ENCODE measurements at regions of chr11 and their contacts with region 1.

Region 1: DNA sequence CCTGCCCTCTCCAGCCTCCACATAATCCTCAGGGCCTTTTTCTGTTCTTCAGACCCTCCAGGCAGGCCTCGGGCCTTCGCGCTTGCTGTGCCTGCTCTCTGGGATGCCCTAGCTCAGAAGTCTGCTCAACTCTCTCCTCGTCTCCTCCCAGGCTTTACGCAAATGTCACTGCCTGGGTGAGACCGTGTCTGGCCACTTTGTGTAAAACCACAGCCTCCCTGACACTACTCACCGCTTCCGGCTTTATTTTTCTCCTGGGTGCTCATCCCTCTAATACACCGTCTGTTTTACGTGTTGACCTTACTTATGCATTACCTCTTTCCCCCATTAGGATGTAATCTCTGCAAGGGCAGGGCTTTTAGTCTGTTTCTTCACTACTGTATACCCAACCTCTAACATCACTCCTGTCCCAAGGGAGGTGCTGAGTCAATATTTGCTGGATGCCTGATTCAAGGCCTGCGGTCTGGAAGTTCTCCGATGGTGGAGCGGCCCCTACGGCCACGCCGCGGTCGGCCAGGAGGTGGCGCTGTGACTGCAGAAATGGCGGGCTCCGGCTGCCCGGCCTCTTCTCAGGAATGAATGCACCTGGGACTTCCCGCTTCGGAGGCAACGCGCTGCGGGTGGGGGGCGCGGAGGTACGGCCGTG is 58.2 kb upstream of the THY1 start:
- DNase-seq: peak; percentile 82
- H3K4me3 ChIP-seq: no peak overlapping the region
- H3K27ac ChIP-seq: no peak overlapping the region
- H3K4me1 ChIP-seq: peaks cover 0 to 11% (median 2%) of the 10 kb centered on the region in 4 donors
- H3K27me3 ChIP-seq: no peaks in the 10 kb centered on the region
- CTCF ChIP-seq: peak; percentile 91 to 97 (median 94)
- EP300 ChIP-seq: no peak
- POLR2A ChIP-seq: no peak

Region 2: DNA sequence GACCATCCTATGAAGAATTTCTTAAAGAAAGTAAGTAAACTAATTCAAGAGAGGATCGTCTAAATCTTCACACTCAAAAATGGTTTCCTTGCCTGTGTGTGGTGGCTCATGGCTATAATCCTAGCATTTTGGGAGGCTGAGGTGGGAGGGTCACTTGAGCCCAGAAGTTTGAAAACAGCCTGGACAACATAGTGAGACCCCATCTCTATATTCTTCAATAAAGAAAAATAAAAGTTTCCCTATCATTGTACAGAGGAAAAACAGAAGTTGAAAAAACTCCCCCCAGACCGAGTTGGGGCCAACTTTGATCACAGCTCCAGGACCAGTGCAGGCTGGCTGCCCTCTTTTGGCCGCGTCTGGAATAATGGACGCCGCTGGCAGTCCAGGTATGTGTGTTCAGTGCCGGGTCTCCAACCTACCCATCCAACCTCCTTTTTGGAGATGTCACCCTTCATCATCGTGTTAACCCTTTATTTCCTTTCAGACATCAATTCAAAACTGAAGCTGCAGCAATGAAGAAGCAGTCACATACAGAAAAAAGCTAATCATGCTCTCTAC is 466.0 kb before region 1 on chr11:
- in situ Hi-C with region 1: no loop called
- intact Hi-C with region 1: no loop called
- DNase-seq: no peak
- H3K4me3 ChIP-seq: no peak overlapping the region
- H3K27ac ChIP-seq: no peak overlapping the region
- H3K4me1 ChIP-seq: peaks cover 15 to 32% (median 28%) of the 10 kb centered on the region in 4 donors
- H3K27me3 ChIP-seq: no peaks in the 10 kb centered on the region
- CTCF ChIP-seq: peak in 1 of 5 experiments; percentile 3
- EP300 ChIP-seq: no peak
- POLR2A ChIP-seq: no peak

Region 3: DNA sequence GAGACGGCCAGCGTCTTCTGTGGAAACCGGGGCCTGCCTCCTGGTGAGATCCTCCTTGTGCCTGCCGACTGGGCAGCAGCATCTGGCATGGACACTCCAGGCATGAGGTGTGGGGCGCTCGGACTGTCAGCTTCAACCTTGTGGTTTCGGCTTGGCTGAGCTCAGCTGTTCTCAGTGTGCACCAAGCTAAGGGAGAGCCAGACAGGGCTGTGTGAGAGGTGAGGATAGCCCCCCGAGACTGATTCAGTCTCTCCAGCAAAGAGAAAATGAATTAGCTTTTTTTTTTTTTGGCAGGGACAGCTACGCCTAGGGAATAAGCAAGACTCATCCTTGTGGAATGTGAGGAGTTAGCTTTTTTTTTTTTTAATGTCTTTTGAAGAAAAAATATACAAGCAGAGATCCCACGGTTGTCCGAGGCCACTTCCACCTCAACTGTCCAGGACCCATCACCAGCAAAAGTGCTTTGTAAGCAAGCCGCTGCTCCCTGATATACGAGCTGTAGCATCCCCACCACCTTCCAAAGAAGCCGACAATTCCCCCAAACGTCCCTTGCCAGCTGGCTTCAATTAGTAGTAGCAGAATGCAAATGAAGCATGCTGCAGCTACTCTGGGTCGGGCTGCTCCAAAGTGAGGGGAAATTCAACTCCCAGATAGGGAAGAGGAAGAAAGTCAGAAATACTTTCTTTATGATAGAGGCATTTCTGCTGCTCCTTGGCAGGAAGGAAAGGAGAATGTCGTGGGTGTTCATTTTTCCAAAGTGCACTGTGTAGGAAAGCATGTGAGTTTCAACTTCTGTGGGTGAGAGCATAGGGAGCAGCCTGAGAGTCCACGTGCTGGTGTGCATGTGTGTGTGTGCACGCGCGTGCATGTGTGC is 48.4 kb before region 1 on chr11:
- in situ Hi-C with region 1: no loop called
- intact Hi-C with region 1: loop called (anchors 1 kb)
- DNase-seq: no peak
- H3K4me3 ChIP-seq: no peak overlapping the region
- H3K27ac ChIP-seq: peak overlapping the region; percentile 41 to 49 (median 42)
- H3K4me1 ChIP-seq: no peaks in the 10 kb centered on the region
- H3K27me3 ChIP-seq: no peaks in the 10 kb centered on the region
- CTCF ChIP-seq: no peak
- EP300 ChIP-seq: no peak
- POLR2A ChIP-seq: no peak

Region 4: GRCh38 chr11:119741369-119742262 is 260.5 kb after region 1 on chr11:
- in situ Hi-C with region 1: no loop called
- intact Hi-C with region 1: loop called (anchors 10 kb)
- DNase-seq: peak; percentile 75
- H3K4me3 ChIP-seq: peak overlapping the region in 1 of 4 donors; percentile 10
- H3K27ac ChIP-seq: peak overlapping the region; percentile 11 to 77 (median 50)
- H3K4me1 ChIP-seq: peaks cover 6 to 62% (median 52%) of the 10 kb centered on the region in 4 donors
- H3K27me3 ChIP-seq: peaks cover 22% of the 10 kb centered on the region
- CTCF ChIP-seq: peak; percentile 78 to 92 (median 89)
- EP300 ChIP-seq: no peak
- POLR2A ChIP-seq: no peak

Region 5: DNA sequence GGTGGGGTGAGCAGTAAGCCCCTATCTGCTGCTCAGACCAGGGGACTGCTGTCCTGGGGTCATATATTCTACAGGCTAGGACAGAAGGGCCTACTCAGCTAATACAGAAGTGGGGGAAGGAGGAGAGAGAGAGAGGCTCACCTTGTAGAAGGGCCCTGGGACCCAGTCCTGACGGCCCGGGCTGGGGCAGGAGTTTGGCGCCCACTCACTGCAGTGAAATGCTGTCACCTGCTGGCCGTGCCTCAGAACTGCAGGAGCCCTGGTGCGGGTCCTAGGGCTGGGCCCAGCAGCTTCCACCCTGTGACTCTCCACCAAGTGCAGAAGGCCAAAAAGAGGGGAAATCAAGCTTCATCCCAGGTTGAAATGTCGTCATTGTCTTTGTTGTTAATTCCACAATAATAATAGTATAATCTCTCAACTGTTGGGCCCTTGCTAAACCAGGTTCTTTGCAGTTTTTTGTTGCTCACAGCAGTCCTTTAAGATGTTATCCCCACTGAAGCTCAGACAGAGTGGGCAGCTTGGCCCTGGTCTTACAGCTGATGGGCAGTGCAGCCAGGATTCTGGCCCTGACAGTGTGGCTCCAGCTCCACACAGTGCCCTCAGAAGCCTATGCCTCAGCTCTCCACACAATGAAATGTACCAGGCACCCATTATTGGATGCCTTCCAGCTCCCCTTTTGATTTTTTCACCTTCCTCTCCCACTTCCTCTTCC is 627.2 kb after region 1 on chr11:
- in situ Hi-C with region 1: loop called in 3 of 4 experiments (anchors 25 kb)
- intact Hi-C with region 1: loop called (anchors 5 kb)
- DNase-seq: peak; percentile 75
- H3K4me3 ChIP-seq: no peak overlapping the region
- H3K27ac ChIP-seq: no peak overlapping the region
- H3K4me1 ChIP-seq: no peaks in the 10 kb centered on the region
- H3K27me3 ChIP-seq: no peaks in the 10 kb centered on the region
- CTCF ChIP-seq: peak; percentile 97 to 100 (median 100)
- EP300 ChIP-seq: no peak
- POLR2A ChIP-seq: no peak